Dendritic cell treated with granulocyte-macrophage colony-stimulating factor and Interleukin-4, amounts not matched to agents 40 ng/mL and 50 ng/mL, for 4 days (primary cell): ENCODE measurements at regions of chr3 and their contacts with region 1.

Region 1: GRCh38 chr3:52685709-52686691 is at the starts of genes GNL3 and PBRM1:
- H3K4me3 Mint-ChIP-seq: peak within 1 kb of the TSS; percentile 91
- H3K27ac Mint-ChIP-seq: peak within 1 kb of the TSS; percentile 97
- H3K4me1 Mint-ChIP-seq: peaks cover 49% of the 10 kb centered on the region
- H3K27me3 Mint-ChIP-seq: no peaks in the 10 kb centered on the region

Region 2: GRCh38 chr3:52705688-52706686 is 20.0 kb after region 1 on chr3 and contains the starts of genes GLT8D1 and SPCS1:
- intact Hi-C with region 1: loop called (anchors 1 kb)
- H3K4me3 Mint-ChIP-seq: peak within 1 kb of the TSS; percentile 98
- H3K27ac Mint-ChIP-seq: peak within 1 kb of the TSS; percentile 97
- H3K4me1 Mint-ChIP-seq: peaks cover 25% of the 10 kb centered on the region
- H3K27me3 Mint-ChIP-seq: no peaks in the 10 kb centered on the region